Activated T-helper 1 cell treated with anti-CD3 and anti-CD28 coated beads, Interleukin-12 subunit alpha, Interleukin-12 subunit beta, Interleukin-2, Interleukin-4 antibody, amounts not matched to agents 30 ng/mL and 10 ng/mL and 1 ng/mL, durations not matched to agents 14 hours and 24 hours and 36 hours (primary cell): ENCODE measurements at regions of chr5 and their contacts with region 1.

Region 1: DNA sequence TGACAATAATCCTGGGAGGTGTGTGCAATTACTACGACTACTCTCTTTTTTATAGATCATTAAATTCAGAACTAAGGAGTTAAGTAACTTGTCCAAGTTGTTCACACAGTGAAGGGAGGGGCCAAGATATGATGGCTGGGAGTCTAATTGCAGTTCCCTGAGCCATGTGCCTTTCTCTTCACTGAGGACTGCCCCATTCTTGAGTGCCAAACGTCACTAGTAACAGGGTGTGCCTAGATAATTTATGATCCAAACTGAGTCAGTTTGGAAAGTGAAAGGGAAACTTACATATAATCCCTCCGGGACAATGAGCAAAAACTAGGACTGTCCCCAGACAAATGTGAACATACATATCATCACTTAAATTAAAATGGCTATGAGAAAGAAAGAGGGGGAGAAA is 20.2 kb downstream of the IL7R start:
- DNase-seq: no peak
- H3K4me3 Mint-ChIP-seq: no peak overlapping the region
- H3K27ac Mint-ChIP-seq: peak overlapping the region; percentile 47
- H3K4me1 Mint-ChIP-seq: peaks cover 81% of the 10 kb centered on the region
- H3K27me3 Mint-ChIP-seq: no peaks in the 10 kb centered on the region

Region 2: DNA sequence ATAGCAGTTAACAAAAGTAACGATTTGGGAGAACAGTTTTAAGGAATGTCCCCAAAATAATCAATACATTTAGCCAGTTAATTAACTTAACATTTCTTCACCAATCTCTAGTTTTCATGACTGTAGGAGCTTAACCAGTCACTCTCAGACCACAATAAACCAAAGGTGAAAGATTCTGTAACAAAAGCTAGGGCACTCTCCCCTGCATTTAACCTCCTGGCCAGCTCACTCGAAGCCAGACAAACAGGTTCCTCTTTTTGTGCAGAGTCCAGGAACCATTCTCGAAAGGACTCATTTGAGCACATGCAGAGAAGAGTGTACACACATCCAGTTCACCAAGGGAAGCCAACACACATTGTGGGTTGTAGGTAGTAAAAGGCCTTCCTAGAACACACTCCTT is 13.8 kb before region 1 on chr5:
- intact Hi-C with region 1: loop called (anchors 2 kb)
- DNase-seq: no peak
- H3K4me3 Mint-ChIP-seq: peak overlapping the region; percentile 86
- H3K27ac Mint-ChIP-seq: peak overlapping the region; percentile 92
- H3K4me1 Mint-ChIP-seq: peaks cover 92% of the 10 kb centered on the region
- H3K27me3 Mint-ChIP-seq: no peaks in the 10 kb centered on the region